ENCODE measurements at regions of chr2 and their contacts with region 1.

Region 1: GRCh38 chr2:44981136-44982108 is 27.8 kb downstream of the SIX2 start:
- DNase-seq: peak; percentile 84
- ATAC-seq: peak; percentile 58
- H3K4me3 Mint-ChIP-seq: no peak overlapping the region
- H3K27ac Mint-ChIP-seq: no peak overlapping the region
- H3K4me1 Mint-ChIP-seq: peaks cover 2% of the 10 kb centered on the region
- H3K27me3 Mint-ChIP-seq: peaks cover 14% of the 10 kb centered on the region

Region 2: DNA sequence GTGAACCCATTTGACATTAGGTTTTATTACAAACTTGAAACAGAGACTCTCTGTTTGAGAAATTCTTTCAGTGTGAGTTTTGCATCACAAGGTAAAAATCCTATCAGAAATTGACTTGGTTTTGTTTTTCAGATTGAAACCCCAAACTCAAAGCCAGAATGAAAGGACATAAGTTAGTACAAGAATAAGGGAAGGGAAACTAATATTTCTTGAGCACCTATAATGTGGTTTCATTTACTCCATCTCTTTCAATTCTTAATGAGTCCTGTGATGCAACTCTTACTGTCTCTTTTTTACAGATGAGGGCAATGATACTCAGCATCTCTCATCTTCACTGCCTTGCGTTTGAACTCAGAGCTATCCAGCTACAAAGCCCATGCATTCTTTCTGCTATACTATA is 249.9 kb before region 1 on chr2:
- CTCF ChIA-PET with region 1: no interaction called
- POLR2A ChIA-PET with region 1: no interaction called
- intact Hi-C with region 1: no loop called
- DNase-seq: no peak
- ATAC-seq: peak; percentile 57
- H3K4me3 Mint-ChIP-seq: no peak overlapping the region
- H3K27ac Mint-ChIP-seq: no peak overlapping the region
- H3K4me1 Mint-ChIP-seq: no peaks in the 10 kb centered on the region
- H3K27me3 Mint-ChIP-seq: no peaks in the 10 kb centered on the region

Region 3: DNA sequence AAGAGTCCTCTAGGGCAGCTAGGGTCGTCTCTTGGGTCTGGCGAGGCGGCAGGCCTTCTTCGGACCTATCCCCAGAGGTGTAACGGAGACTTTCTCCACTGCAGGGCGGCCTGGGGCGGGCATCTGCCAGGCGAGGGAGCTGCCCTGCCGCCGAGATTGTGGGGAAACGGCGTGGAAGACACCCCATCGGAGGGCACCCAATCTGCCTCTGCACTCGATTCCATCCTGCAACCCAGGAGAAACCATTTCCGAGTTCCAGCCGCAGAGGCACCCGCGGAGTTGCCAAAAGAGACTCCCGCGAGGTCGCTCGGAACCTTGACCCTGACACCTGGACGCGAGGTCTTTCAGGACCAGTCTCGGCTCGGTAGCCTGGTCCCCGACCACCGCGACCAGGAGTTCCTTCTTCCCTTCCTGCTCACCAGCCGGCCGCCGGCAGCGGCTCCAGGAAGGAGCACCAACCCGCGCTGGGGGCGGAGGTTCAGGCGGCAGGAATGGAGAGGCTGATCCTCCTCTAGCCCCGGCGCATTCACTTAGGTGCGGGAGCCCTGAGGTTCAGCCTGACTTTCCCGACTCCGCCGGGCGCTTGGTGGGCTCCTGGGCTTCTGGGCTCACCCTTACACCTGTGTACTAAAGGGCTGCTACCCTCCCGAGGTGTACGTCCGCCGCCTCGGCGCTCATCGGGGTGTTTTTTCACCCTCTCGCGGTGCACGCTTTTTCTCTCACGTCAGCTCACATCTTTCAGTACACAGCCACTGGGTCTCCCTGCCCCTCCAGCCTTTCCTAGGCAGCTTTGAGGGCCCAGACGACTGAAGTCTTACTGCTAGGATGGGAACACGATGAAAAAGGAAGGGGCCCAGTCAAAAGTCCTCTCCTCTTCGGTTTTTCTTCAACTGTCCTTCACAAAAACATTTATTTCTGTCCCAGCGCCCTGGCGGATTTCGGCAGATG is 19.8 kb after region 1 on chr2:
- CTCF ChIA-PET with region 1: interaction called, 35 read pairs
- POLR2A ChIA-PET with region 1: no interaction called
- intact Hi-C with region 1: no loop called
- DNase-seq: peak; percentile 27
- ATAC-seq: no peak
- H3K4me3 Mint-ChIP-seq: peak overlapping the region; percentile 47
- H3K27ac Mint-ChIP-seq: no peak overlapping the region
- H3K4me1 Mint-ChIP-seq: peaks cover 20% of the 10 kb centered on the region
- H3K27me3 Mint-ChIP-seq: peaks cover 75% of the 10 kb centered on the region

Region 4: GRCh38 chr2:45142227-45142866 is 160.9 kb after region 1 on chr2:
- CTCF ChIA-PET with region 1: no interaction called
- POLR2A ChIA-PET with region 1: no interaction called
- intact Hi-C with region 1: no loop called
- DNase-seq: no peak
- ATAC-seq: no peak
- H3K4me3 Mint-ChIP-seq: no peak overlapping the region
- H3K27ac Mint-ChIP-seq: no peak overlapping the region
- H3K4me1 Mint-ChIP-seq: no peaks in the 10 kb centered on the region
- H3K27me3 Mint-ChIP-seq: peaks cover 40% of the 10 kb centered on the region

Region 5: GRCh38 chr2:45578056-45578809 is 596.8 kb after region 1 on chr2:
- CTCF ChIA-PET with region 1: interaction called, 7 read pairs
- POLR2A ChIA-PET with region 1: no interaction called
- intact Hi-C with region 1: loop called (anchors 1 to 5 kb)
- DNase-seq: peak; percentile 40
- ATAC-seq: peak; percentile 86
- H3K4me3 Mint-ChIP-seq: no peak overlapping the region
- H3K27ac Mint-ChIP-seq: no peak overlapping the region
- H3K4me1 Mint-ChIP-seq: no peaks in the 10 kb centered on the region
- H3K27me3 Mint-ChIP-seq: no peaks in the 10 kb centered on the region

Measured in activated CD4-positive, alpha-beta T cell treated with anti-CD3 and anti-CD28 coated beads for 36 hours (primary cell).